ENCODE measurements at regions of chr17 and their contacts with region 1.

Region 1: DNA sequence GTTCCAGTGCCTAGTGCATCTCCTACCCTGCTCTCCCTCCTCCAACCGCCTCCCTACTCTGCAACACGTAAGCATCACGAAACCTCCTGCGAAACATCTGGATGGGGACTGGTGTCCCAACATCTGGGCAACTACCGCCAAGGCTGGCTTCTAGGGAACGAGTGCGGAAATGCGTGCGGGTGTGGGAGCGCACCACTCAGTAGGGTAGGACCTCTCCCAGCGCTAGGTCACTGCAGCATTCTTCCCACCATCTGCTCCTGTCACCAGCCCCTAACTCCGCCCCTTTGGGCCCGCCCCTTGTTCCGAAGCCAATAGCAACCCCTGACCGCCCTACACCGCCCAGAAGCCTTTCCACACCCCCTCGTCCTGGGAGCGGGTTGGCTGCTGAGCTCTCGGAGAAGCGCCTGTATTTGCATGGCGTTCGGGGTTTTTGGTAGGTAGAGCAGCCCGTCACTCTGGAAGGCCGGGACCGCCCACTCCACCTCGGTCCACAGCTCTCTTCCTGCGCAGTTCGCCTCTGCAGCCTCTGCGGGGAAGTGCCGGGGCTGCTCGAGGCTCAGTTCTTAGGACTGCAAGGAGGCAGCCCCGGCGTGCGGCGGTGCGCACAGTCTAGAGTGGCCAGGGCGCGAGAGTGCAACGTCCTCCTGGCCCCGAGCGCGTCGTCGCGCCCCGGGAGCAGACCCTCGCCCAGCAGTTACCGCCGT is at the start of gene HS3ST3B1:
- DNase-seq: peak; percentile 96
- ATAC-seq: peak; percentile 96
- H3K4me3 ChIP-seq: peak within 1 kb of the TSS; percentile 45 to 59
- H3K27ac ChIP-seq: peak within 1 kb of the TSS; percentile 55; the same call in 1 of the 2 replicates
- H3K4me1 ChIP-seq: peaks cover 11 to 28% of the 10 kb centered on the region in 2 experiments; a peak in 3 of 4 replicates
- H3K27me3 ChIP-seq: peaks cover 7% of the 10 kb centered on the region; the same call in 1 of the 2 replicates
- CTCF ChIP-seq: no peak
- POLR2A ChIP-seq: peak; percentile 39
- RAD21 ChIP-seq: no peak
- total RNA-seq, gene HS3ST3B1: 2.4 TPM

Region 2: GRCh38 chr17:13031718-13032350 is 1268.9 kb before region 1 on chr17:
- CTCF ChIA-PET with region 1: no interaction called
- POLR2A ChIA-PET with region 1: no interaction called
- RAD21 ChIA-PET with region 1: no interaction called
- intact Hi-C with region 1: loop called (anchors 5 kb)
- DNase-seq: peak; percentile 45
- ATAC-seq: peak; percentile 82
- H3K4me3 ChIP-seq: no peak overlapping the region
- H3K27ac ChIP-seq: no peak overlapping the region
- H3K4me1 ChIP-seq: no peaks in the 10 kb centered on the region
- H3K27me3 ChIP-seq: no peaks in the 10 kb centered on the region
- CTCF ChIP-seq: peak; percentile 47 to 89 (median 86); a peak in 5 of 6 replicates
- POLR2A ChIP-seq: no peak
- RAD21 ChIP-seq: peak; percentile 38; the same call in 1 of the 2 replicates

Region 3: GRCh38 chr17:13337864-13338371 is 962.8 kb before region 1 on chr17:
- CTCF ChIA-PET with region 1: interaction called, 4 read pairs
- POLR2A ChIA-PET with region 1: no interaction called
- RAD21 ChIA-PET with region 1: no interaction called
- intact Hi-C with region 1: loop called (anchors 2 kb)
- DNase-seq: peak; percentile 54
- ATAC-seq: peak; percentile 79
- H3K4me3 ChIP-seq: peak overlapping the region; percentile 35 to 50
- H3K27ac ChIP-seq: no peak overlapping the region
- H3K4me1 ChIP-seq: peaks cover 0 to 4% of the 10 kb centered on the region in 2 experiments; a peak in 1 of 4 replicates
- H3K27me3 ChIP-seq: no peaks in the 10 kb centered on the region
- CTCF ChIP-seq: peak; percentile 58 to 82 (median 72); a peak in 5 of 6 replicates
- POLR2A ChIP-seq: no peak
- RAD21 ChIP-seq: peak; percentile 77

Region 4: GRCh38 chr17:14048169-14048568 is 252.6 kb before region 1 on chr17:
- CTCF ChIA-PET with region 1: no interaction called
- POLR2A ChIA-PET with region 1: no interaction called
- RAD21 ChIA-PET with region 1: no interaction called
- intact Hi-C with region 1: loop called (anchors 10 kb)
- DNase-seq: no peak
- ATAC-seq: peak; percentile 76
- H3K4me3 ChIP-seq: no peak overlapping the region
- H3K27ac ChIP-seq: no peak overlapping the region
- H3K4me1 ChIP-seq: no peaks in the 10 kb centered on the region
- H3K27me3 ChIP-seq: no peaks in the 10 kb centered on the region
- CTCF ChIP-seq: peak in 2 of 3 experiments; percentile 47 to 61; a peak in 4 of 6 replicates
- POLR2A ChIP-seq: no peak
- RAD21 ChIP-seq: no peak